ENCODE measurements at regions of chr13 and their contacts with region 1.

Region 1: GRCh38 chr13:39051157-39051556 is 12.9 kb downstream of the NHLRC3 start:
- DNase-seq: no peak
- H3K4me3 Mint-ChIP-seq: no peak overlapping the region
- H3K27ac Mint-ChIP-seq: no peak overlapping the region
- H3K4me1 Mint-ChIP-seq: peaks cover 14% of the 10 kb centered on the region
- H3K27me3 Mint-ChIP-seq: no peaks in the 10 kb centered on the region

Region 2: GRCh38 chr13:38073931-38074330 is 977.2 kb before region 1 on chr13:
- CTCF ChIA-PET with region 1: no interaction called
- intact Hi-C with region 1: no loop called
- DNase-seq: no peak
- H3K4me3 Mint-ChIP-seq: no peak overlapping the region
- H3K27ac Mint-ChIP-seq: no peak overlapping the region
- H3K4me1 Mint-ChIP-seq: no peaks in the 10 kb centered on the region
- H3K27me3 Mint-ChIP-seq: no peaks in the 10 kb centered on the region

Region 3: GRCh38 chr13:39406688-39407087 is 355.5 kb after region 1 on chr13:
- CTCF ChIA-PET with region 1: no interaction called
- intact Hi-C with region 1: loop called (anchors 10 kb)
- DNase-seq: no peak
- H3K4me3 Mint-ChIP-seq: no peak overlapping the region
- H3K27ac Mint-ChIP-seq: no peak overlapping the region
- H3K4me1 Mint-ChIP-seq: no peaks in the 10 kb centered on the region
- H3K27me3 Mint-ChIP-seq: peaks cover 18% of the 10 kb centered on the region

Region 4: DNA sequence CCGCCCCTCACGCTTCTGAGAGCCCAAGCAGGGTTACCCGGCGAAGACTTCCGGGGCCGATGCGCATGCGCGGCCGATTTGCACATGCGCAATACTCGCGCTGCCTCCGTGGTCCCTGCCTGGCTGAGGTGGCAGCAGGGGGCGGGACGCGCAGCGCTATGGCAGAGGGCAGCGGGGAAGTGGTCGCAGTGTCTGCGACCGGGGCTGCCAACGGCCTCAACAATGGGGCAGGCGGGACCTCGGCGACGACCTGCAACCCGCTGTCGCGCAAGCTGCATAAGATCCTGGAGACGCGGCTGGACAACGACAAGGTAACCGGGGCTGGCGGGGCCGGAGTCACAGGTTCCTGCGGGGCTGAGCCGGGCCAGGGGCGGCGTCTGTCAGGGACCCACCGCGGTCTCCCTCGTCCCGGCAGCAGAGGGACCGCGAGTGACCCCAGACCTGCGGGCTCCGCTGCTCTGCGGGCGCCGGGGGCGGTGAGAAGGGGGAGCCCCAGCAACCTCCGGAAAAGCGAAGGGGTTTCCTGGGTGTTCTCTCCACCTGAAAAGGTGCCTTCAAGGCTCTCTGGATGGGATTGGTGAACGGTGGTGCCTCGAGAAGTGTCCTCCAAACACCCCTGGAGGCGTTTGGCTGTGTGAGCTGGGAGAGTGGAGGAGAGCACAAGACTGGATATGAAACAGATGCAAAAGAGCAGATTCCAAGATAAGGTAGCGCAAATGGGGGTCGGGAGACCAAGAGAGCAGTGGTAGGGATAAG is 604.6 kb after region 1 on chr13 and contains the start of gene COG6:
- CTCF ChIA-PET with region 1: no interaction called
- intact Hi-C with region 1: loop called (anchors 5 kb)
- DNase-seq: peak; percentile 93
- H3K4me3 Mint-ChIP-seq: peak within 1 kb of the TSS; percentile 92
- H3K27ac Mint-ChIP-seq: peak within 1 kb of the TSS; percentile 74
- H3K4me1 Mint-ChIP-seq: peaks cover 27% of the 10 kb centered on the region
- H3K27me3 Mint-ChIP-seq: peaks cover 2% of the 10 kb centered on the region
- total RNA-seq, gene COG6: 21.2 to 28.3 TPM

Region 5: DNA sequence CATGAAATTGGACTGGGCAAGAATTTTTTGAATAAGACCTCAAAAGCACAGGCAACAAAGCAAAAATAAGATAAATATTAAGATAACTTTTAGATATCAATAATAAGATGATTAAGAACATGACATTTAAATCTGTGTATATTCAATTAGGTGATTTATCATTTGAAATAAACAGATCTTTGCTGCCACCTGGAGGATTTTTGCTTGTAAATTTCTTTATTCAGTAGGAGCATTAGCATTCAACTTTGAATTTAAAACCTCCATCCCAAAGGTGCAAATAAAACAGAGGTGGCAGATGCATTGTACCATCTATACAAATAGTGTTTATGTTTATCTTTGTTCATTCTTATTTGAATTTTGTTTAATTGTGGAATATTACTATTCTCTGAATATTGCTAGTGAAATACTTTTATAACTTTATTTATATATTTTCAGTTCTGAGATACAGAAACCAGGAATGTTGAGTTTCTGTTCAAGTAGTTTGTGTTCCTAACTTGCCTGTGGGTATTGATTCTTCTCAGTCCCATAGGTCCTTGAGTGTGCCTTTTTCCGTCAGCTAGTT is 625.2 kb after region 1 on chr13:
- CTCF ChIA-PET with region 1: no interaction called
- intact Hi-C with region 1: loop called (anchors 1 kb)
- DNase-seq: peak; percentile 23
- H3K4me3 Mint-ChIP-seq: no peak overlapping the region
- H3K27ac Mint-ChIP-seq: no peak overlapping the region
- H3K4me1 Mint-ChIP-seq: peaks cover 4% of the 10 kb centered on the region
- H3K27me3 Mint-ChIP-seq: no peaks in the 10 kb centered on the region

Measured in activated naive CD4-positive, alpha-beta T cell treated with anti-CD3 and anti-CD28 coated beads for 36 hours (primary cell).